GM10248 (cell line): ENCODE measurements at regions of chr4 and their contacts with region 1.

Region 1: DNA sequence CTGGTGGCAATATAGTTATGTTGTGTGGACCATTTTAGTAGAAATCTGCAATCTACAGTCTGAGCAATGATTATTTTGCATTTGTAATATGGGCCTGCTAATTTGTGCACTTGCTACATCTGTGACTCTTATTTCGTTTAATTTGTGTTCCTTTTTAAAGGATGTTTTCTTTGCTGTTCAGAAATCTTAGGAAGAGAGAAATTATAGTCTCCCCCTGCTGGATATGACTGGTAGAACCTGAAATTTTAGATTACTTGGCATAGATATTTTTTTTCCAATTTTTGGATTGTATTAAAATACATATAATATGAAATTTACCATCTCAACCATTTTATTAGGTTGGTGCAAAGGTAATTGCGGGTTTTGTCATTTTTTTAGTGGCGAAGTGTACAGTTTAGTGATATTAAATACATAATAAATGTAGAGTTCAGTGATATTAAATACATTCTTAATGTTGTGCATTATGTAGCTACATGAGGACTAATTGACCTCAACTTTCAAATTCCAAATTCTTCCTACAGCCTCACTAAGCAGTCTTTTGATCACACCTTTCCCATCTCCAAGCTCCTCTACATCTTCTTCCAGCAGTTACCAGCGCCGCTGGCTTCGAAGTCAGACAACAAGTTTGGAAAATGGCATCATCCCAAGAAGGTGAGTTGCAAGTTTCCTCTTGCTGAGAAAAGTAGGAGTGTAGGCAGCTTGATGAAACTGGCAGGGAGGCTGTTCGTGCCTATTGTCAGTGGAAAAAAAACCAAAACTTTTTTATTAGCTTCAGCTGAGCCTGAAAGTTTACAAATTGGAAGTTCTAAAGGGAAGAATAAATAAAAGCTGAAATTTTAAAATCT is 82.2 kb downstream of the FNIP2 start:
- DNase-seq: peak; percentile 31
- CTCF ChIP-seq: peak; percentile 32

Region 2: GRCh38 chr4:158805619-158806471 is 45.2 kb before region 1 on chr4:
- CTCF ChIA-PET with region 1: no interaction called
- POLR2A ChIA-PET with region 1: no interaction called
- DNase-seq: no peak
- CTCF ChIP-seq: no peak

Region 3: DNA sequence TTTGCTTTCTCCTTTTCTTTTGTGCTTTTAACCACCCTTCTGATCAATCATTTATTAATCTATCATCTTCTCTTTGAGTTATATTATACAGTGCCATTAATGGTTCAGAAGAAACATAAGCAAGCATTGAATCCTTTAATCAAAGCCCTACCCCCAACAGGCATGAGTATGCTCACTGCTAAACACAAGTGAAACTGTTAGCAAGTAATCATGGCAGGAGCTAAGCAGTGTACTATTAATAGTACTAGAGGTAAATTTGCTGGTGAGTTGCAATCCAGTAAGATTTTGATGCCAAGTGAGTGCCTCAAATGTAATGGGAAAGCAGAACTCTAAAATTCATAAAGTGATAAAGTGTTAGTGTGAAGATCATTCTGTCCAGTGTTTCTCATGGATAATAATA is 25.0 kb before region 1 on chr4:
- CTCF ChIA-PET with region 1: interaction called, 17 read pairs
- POLR2A ChIA-PET with region 1: no interaction called
- DNase-seq: no peak
- CTCF ChIP-seq: no peak

Region 4: DNA sequence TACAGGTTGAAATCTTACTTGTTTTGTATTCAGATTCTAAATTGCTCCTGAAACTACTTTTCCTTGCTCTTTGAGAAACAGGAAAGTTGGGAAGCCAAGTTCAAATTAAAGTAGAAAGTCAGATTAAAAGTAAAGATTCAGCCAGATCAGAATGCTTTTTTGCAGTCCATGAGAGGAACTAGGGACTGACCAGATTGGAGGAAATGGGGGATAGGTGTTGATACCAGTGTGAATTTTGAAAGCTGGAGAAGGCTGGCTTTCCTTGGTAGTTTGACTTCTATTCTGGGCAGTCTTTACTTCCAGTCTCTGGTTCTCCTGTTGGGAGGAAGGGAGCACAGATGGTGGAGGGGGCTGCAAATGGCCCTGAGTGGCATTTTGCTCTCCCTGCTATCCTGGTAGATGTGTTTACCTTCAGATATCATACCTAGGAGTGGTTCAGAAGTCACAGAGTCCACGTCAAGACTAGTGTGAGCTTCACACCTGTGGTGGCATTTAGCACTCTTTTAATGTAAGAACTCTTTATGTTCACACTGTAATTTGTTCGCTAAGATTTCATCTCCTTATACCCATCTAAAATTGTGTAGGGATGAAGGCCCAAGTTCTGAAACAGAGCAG is 13.4 kb before region 1 on chr4:
- CTCF ChIA-PET with region 1: interaction called, 15 read pairs
- POLR2A ChIA-PET with region 1: no interaction called
- DNase-seq: no peak
- CTCF ChIP-seq: no peak

Region 5: GRCh38 chr4:158865520-158866177 is 14.6 kb after region 1 on chr4:
- CTCF ChIA-PET with region 1: interaction called, 42 read pairs
- POLR2A ChIA-PET with region 1: no interaction called
- DNase-seq: peak; percentile 25
- CTCF ChIP-seq: no peak

Region 6: GRCh38 chr4:159175085-159175988 is 324.3 kb after region 1 on chr4:
- CTCF ChIA-PET with region 1: interaction called, 12 read pairs
- POLR2A ChIA-PET with region 1: no interaction called
- DNase-seq: peak; percentile 29
- CTCF ChIP-seq: peak; percentile 71

Region 7: DNA sequence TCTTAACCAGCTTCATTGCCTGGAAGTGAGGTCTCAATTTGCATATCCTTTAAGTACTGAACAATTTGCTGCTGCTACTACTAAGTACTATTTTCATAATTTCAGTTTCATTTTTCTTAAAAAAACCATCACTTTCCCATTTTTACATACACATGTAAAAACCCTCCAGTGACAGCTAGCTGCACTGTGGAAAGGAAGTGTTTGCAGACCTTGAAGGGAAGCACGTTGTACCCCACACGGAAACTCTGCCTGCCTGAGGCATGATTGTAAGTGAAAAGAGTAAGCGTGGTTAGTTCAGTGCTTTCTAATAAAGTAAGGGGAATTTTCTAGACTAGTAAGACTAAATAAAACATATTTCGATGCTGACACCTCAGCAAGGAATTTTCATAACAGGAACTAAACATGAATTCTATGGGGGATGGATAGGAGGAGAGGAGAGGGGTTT is 355.4 kb after region 1 on chr4:
- CTCF ChIA-PET with region 1: interaction called, 55 read pairs
- POLR2A ChIA-PET with region 1: no interaction called
- DNase-seq: peak; percentile 46
- CTCF ChIP-seq: no peak